CD4-positive, alpha-beta memory T cell (primary cell): ENCODE measurements at regions of chr19 and their contacts with region 1.

Region 1: DNA sequence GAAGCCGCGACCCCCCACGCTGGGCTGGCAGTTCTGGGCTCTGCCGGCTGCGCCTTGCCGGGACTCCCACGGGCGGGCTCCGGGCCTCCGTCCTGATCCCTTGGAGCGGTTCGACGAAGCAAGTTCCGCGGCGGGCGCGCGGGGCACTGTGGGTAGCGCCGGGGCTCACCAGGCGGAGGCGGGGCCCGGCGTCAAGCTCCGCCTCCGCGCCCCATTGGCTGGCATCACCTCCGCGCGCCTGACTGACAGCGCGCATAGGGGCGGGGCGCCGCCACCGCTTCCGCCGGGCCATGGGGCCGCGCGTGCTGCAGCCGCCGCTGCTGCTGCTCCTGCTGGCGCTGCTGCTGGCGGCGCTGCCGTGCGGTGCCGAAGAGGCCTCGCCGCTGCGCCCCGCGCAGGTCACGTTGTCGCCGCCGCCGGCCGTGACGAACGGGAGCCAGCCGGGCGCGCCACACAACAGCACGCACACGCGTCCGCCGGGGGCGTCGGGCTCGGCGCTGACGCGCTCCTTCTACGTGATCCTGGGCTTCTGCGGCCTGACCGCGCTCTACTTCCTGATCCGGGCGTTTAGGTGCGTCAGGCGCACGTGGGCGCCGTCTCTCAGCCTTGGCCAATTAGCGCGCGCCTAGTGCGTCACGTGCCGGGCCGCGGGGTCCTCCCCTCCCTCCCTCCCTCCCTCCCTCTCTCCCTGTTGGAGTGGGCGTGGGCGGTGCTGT is at the start of gene FAM174C:
- DNase-seq: peak; percentile 95 to 97 (median 97)
- H3K4me3 ChIP-seq: peak within 1 kb of the TSS; percentile 42 to 87
- H3K4me3 Mint-ChIP-seq: peak within 1 kb of the TSS; percentile 87 to 93 (median 90)
- H3K27ac ChIP-seq: peak within 1 kb of the TSS; percentile 93
- H3K27ac Mint-ChIP-seq: peak within 1 kb of the TSS; percentile 95 to 98 (median 96)
- H3K4me1 ChIP-seq: peaks cover 61% of the 10 kb centered on the region
- H3K4me1 Mint-ChIP-seq: peaks cover 30 to 66% (median 42%) of the 10 kb centered on the region in 4 donors
- H3K27me3 ChIP-seq: no peaks in the 10 kb centered on the region
- H3K27me3 Mint-ChIP-seq: no peaks in the 10 kb centered on the region
- total RNA-seq, gene FAM174C: 50.5 to 54.2 TPM

Region 2: DNA sequence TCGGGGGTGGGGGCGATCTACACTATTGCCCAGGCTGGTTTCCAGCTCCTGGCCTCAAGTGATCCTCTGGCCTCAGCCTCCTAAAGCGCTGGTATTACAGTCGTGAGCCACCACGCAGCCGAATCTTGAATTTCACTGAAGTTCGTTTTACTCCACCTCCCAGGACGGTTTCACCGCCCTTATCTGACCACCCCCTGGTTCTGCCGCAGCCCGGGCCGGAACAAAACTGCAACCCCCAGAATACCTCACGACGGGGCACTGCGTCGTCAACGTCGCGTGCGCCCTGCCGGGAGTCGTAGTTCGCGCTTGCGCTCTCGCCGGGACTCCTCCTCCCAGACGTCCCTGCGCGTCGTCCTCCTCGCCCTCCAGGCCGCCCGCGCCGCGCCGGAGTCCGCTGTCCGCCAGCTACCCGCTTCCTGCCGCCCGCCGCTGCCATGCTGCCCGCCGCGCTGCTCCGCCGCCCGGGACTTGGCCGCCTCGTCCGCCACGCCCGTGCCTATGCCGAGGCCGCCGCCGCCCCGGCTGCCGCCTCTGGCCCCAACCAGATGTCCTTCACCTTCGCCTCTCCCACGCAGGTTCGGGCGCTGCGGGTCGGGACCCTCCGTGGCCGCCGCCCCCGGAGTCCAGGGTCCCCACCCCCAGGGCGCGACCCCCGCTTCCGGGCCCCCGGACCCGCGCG is 33.9 kb before region 1 on chr19 and contains the start of gene ATP5F1D:
- CTCF ChIA-PET with region 1: interaction called, 31 read pairs
- POLR2A ChIA-PET with region 1: interaction called, 34 read pairs
- intact Hi-C with region 1: no loop called
- DNase-seq: peak; percentile 84 to 88 (median 86)
- H3K4me3 ChIP-seq: peak within 1 kb of the TSS; percentile 29 to 59
- H3K4me3 Mint-ChIP-seq: peak within 1 kb of the TSS; percentile 89 to 95 (median 92)
- H3K27ac ChIP-seq: peak within 1 kb of the TSS; percentile 72
- H3K27ac Mint-ChIP-seq: peak within 1 kb of the TSS; percentile 94 to 99 (median 98)
- H3K4me1 ChIP-seq: peaks cover 59% of the 10 kb centered on the region
- H3K4me1 Mint-ChIP-seq: peaks cover 12 to 52% (median 33%) of the 10 kb centered on the region in 4 donors
- H3K27me3 ChIP-seq: no peaks in the 10 kb centered on the region
- H3K27me3 Mint-ChIP-seq: peaks cover 6 to 10% of the 10 kb centered on the region in 2 donors
- total RNA-seq, gene ATP5F1D: 105 to 108 TPM

Region 3: DNA sequence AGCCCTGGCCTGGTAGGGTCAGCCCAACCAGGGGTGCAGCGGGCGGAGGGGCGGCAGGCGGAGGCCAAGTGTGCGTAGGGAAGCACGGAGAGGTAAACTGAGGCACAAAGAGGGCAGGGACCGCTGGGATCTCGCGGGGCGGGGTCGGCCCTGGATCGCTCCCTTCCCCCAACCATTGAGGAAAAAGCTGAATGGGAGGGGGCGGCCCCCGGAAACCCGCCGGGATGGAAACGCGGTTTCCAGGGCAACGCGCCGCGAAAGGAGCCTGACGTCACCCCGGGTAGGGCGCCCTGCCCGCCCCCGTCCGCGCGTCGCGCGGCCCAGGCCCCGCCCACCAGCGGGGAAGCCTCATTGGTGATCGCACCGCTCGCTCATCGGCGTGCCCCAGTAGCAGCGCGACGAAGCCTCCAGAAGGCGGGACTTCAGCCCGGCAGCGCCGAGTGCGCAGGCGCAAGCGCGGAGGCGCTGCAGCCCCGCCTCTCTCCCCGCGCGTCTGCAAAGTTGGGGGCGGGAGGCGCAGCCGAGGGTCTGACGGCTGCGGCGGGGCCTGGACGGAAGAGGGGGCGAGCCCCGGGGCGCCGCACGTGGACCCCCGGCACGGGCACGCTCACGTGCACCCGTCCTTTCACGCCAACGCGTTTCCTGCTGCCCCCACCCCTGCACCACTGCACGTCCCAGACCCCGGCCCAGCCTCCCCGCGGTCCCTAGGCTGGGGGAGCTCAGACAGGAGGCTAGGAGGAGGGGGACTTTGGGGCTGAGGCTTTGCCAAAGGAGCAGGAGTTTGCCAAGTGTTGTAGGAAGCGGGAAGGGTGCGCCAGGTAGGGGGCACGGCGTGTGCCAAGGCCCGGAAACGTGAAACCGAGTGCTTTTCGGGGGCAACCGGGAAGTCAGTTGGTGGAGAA is 14.5 kb before region 1 on chr19:
- CTCF ChIA-PET with region 1: interaction called, 4 read pairs
- POLR2A ChIA-PET with region 1: interaction called, 74 read pairs
- intact Hi-C with region 1: no loop called
- DNase-seq: peak; percentile 96 to 97 (median 97)
- H3K4me3 ChIP-seq: peak overlapping the region; percentile 78
- H3K4me3 Mint-ChIP-seq: peak overlapping the region; percentile 85 to 93 (median 91)
- H3K27ac ChIP-seq: peak overlapping the region; percentile 87
- H3K27ac Mint-ChIP-seq: peak overlapping the region; percentile 95 to 99 (median 99)
- H3K4me1 ChIP-seq: peaks cover 70% of the 10 kb centered on the region
- H3K4me1 Mint-ChIP-seq: peaks cover 29 to 64% (median 44%) of the 10 kb centered on the region in 4 donors
- H3K27me3 ChIP-seq: no peaks in the 10 kb centered on the region
- H3K27me3 Mint-ChIP-seq: peaks cover 0 to 3% of the 10 kb centered on the region in 2 donors

Region 4: DNA sequence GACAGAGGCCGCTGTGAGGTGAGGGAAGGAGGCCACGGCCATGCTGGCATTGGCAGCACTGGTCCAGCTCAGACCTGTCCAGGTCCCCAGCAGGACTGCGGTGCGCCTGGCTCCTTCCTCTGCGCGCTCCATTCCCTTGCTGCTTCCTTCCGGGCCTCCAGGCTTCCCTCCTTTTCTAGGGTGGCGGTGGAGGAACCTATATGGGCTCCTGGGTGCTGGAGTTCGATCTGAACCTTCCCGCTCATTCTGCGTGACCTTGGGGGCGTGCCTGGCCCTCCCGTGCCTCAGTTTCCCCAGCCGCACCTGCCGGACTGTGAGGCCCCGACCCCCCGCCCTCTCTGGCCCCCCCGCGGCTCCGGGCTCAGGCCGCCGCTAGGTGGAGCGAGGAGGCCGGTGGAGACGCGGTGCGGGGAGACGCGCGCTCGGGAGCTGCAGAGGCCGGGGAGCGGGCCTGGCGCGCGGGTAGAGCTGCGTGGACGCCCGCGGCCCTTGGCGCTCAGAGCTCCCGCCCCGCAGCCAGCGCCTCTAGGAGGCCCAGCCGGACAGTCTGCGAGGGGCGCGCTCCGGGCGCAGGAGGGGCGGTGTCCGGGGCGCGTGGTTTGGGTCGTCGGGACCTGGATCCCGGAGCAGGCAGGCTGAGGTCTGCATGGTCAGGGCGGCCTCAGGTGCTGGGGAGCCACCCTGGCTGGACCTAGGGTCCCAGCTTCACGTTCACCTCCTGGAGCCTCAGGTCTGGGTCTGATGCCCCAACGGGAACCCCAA is 40.2 kb after region 1 on chr19:
- CTCF ChIA-PET with region 1: no interaction called
- POLR2A ChIA-PET with region 1: no interaction called
- intact Hi-C with region 1: no loop called
- DNase-seq: no peak
- H3K4me3 ChIP-seq: no peak overlapping the region
- H3K4me3 Mint-ChIP-seq: no peak overlapping the region
- H3K27ac ChIP-seq: no peak overlapping the region
- H3K27ac Mint-ChIP-seq: no peak overlapping the region
- H3K4me1 ChIP-seq: no peaks in the 10 kb centered on the region
- H3K4me1 Mint-ChIP-seq: no peaks in the 10 kb centered on the region
- H3K27me3 ChIP-seq: no peaks in the 10 kb centered on the region
- H3K27me3 Mint-ChIP-seq: peaks cover 17 to 21% of the 10 kb centered on the region in 2 donors

Region 5: GRCh38 chr19:1373534-1374249 is 98.3 kb after region 1 on chr19:
- CTCF ChIA-PET with region 1: interaction called, 10 read pairs
- POLR2A ChIA-PET with region 1: no interaction called
- intact Hi-C with region 1: no loop called
- DNase-seq: no peak
- H3K4me3 ChIP-seq: no peak overlapping the region
- H3K4me3 Mint-ChIP-seq: no peak overlapping the region
- H3K27ac ChIP-seq: no peak overlapping the region
- H3K27ac Mint-ChIP-seq: no peak overlapping the region
- H3K4me1 ChIP-seq: no peaks in the 10 kb centered on the region
- H3K4me1 Mint-ChIP-seq: no peaks in the 10 kb centered on the region
- H3K27me3 ChIP-seq: no peaks in the 10 kb centered on the region
- H3K27me3 Mint-ChIP-seq: no peaks in the 10 kb centered on the region

Region 6: GRCh38 chr19:1406774-1407499 is 131.5 kb after region 1 on chr19:
- CTCF ChIA-PET with region 1: no interaction called
- POLR2A ChIA-PET with region 1: interaction called, 5 read pairs
- intact Hi-C with region 1: loop called (anchors 1 kb)
- DNase-seq: peak; percentile 98 to 100 (median 100)
- H3K4me3 ChIP-seq: peak overlapping the region; percentile 33 to 57
- H3K4me3 Mint-ChIP-seq: peak overlapping the region; percentile 73 to 87 (median 82)
- H3K27ac ChIP-seq: peak overlapping the region; percentile 88
- H3K27ac Mint-ChIP-seq: peak overlapping the region; percentile 67 to 86 (median 84)
- H3K4me1 ChIP-seq: peaks cover 43% of the 10 kb centered on the region
- H3K4me1 Mint-ChIP-seq: peaks cover 20 to 48% (median 37%) of the 10 kb centered on the region in 4 donors
- H3K27me3 ChIP-seq: no peaks in the 10 kb centered on the region
- H3K27me3 Mint-ChIP-seq: no peaks in the 10 kb centered on the region

Region 7: DNA sequence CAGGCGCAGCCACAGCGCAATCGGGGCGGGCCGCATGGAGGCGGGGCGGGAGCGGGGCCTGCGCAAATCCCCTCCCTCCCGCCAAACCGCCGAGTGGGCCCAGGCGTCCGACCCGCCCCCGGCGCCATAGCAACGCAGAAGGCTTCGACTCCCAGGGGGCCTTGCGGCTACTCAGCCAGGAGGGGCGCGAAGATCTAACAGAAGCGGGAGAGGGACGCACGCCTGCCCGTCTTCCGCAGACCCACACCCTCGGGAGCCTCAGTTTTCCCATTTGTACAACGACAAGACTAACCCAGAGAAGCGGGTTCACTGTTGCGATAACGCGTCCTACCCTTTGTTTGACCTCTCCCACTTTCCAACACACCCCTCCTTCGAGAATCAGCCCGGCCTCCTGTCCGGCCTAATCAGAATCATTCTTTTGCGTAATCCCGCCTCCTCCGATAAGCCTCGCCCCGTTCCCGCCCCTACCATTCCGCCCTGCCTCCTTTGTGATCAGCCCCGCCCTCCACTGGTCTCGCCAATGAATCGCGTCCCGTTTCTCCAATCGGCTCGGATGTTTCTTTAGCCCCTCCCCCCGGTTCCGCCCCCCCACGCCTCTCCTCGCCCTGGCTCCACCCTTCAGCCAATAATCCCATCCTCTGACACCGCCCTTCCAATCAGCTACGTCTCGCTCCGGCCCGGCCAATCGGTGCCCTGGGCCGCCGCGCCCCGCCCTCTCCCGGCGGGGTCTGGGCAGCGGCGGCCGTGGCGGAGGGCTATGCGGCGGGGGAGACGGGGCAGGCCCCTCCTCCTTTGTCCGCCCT is 215.1 kb after region 1 on chr19 and contains the start of gene PCSK4:
- CTCF ChIA-PET with region 1: no interaction called
- POLR2A ChIA-PET with region 1: no interaction called
- intact Hi-C with region 1: loop called (anchors 1 kb)
- DNase-seq: peak; percentile 97 to 100 (median 98)
- H3K4me3 ChIP-seq: peak within 1 kb of the TSS; percentile 34 to 58
- H3K4me3 Mint-ChIP-seq: peak within 1 kb of the TSS; percentile 86 to 95 (median 90)
- H3K27ac ChIP-seq: peak within 1 kb of the TSS; percentile 51
- H3K27ac Mint-ChIP-seq: peak within 1 kb of the TSS; percentile 88 to 96 (median 93)
- H3K4me1 ChIP-seq: peaks cover 15% of the 10 kb centered on the region
- H3K4me1 Mint-ChIP-seq: peaks cover 3 to 18% (median 10%) of the 10 kb centered on the region in 4 donors
- H3K27me3 ChIP-seq: no peaks in the 10 kb centered on the region
- H3K27me3 Mint-ChIP-seq: peaks cover 0 to 3% of the 10 kb centered on the region in 2 donors
- total RNA-seq, gene PCSK4: 3.1 to 3.7 TPM

Region 8: DNA sequence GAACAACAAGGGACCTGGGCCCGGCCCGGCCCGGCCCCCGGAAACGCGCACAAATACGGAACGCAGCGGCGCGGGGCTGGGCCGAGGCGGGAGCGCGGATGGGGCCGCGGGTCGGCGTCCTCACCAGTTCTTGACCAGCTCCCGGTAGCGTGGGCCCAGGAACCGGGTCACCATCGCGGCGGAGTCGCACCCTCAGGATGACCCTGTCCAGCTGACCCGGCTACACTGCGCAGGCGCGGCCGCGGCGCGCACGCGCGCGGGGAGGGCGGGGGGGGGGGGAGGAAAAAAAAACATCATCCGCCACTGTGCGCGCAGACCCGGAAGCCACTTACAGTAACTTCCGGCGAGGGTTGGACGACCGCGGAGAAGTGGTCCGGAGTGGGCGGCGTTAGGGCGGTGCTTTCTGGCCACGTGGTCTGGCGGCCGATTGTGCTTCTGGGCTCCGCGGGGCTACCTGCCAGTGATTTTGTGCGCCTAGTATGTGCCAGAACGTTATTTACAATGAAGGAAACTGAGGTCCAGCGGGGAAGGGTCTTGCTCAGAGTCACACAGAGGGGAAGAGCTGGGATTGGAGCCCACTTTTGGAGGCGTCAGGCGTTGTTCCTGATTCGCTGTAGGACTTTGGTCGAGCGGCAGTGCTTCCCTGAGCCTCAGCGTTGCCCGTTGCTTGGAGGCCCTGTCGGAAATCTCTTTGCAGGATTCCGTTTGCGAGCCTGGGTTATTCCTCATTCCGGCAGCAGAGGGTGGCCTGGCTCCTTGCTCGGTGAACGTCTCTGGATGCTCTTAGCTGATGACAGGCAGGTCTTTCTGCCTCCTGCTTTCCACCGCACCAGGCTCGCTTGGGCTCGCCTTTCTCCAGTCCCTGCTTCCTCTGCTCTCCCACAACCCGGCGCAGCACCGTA is 330.1 kb after region 1 on chr19 and contains the start of gene UQCR11:
- CTCF ChIA-PET with region 1: no interaction called
- POLR2A ChIA-PET with region 1: no interaction called
- intact Hi-C with region 1: loop called (anchors 1 kb)
- DNase-seq: peak; percentile 87 to 95 (median 91)
- H3K4me3 ChIP-seq: peak within 1 kb of the TSS; percentile 80 to 85
- H3K4me3 Mint-ChIP-seq: peak within 1 kb of the TSS; percentile 94 to 99 (median 96)
- H3K27ac ChIP-seq: peak within 1 kb of the TSS; percentile 94
- H3K27ac Mint-ChIP-seq: peak within 1 kb of the TSS; percentile 98 to 100 (median 99)
- H3K4me1 ChIP-seq: peaks cover 56% of the 10 kb centered on the region
- H3K4me1 Mint-ChIP-seq: peaks cover 20 to 70% (median 47%) of the 10 kb centered on the region in 4 donors
- H3K27me3 ChIP-seq: no peaks in the 10 kb centered on the region
- H3K27me3 Mint-ChIP-seq: no peaks in the 10 kb centered on the region
- total RNA-seq, gene UQCR11: 157 to 158 TPM